Endothelial cell of umbilical vein (primary cell): ENCODE measurements at regions of chr4 and their contacts with region 1.

Region 1: DNA sequence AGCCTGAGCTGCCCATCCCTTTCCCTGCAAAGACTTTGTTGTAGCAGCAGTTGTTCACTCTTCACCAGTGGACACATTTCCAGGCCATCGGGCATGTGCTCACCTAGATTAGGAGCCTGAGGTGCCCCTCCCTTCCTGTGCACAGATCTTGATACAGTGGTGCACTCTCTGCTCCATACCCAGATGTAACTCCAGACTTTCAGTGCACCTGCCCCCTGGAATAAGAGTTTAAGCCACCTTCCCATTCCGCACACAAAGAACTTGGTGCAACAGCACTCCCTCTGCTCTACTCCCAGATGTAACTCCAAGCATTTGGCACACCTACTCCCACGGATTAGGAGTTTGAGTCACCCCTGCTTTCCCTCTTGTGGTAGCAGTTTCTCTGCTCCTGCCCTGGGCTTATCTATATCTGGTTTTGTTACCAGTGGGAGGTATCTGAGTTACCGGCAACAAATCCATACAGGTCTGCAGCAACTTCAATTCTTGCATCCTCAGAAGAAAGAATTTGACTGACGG is 36.0 kb upstream of the PLK4 start:
- DNase-seq: no peak
- H3K4me3 ChIP-seq: no peak overlapping the region
- H3K27ac ChIP-seq: no peak overlapping the region
- H3K4me1 ChIP-seq: no peaks in the 10 kb centered on the region
- H3K27me3 ChIP-seq: no peaks in the 10 kb centered on the region
- CTCF ChIP-seq: no peak
- POLR2A ChIP-seq: no peak

Region 2: DNA sequence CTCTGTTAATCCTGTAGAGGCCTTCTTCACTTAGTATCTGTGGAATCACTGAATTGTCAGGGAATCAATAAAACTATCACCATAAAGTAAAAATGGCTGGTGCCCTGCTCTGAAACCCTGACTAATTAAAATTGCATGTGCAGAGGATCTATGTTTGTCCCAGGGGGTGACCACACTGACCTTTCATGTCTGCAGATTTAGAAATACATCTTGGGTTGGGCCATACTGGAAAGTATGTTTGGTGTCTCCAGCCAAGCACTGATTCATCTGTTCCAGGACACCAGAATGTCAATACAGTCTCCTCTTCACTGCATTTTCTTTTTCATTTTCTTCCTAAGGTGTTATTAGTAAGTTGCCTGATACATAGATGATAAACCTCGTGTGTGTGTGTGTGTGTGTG is 702.8 kb before region 1 on chr4:
- CTCF ChIA-PET with region 1: no interaction called
- POLR2A ChIA-PET with region 1: no interaction called
- dilution Hi-C with region 1: no loop called
- intact Hi-C with region 1: no loop called
- DNase-seq: no peak
- H3K4me3 ChIP-seq: no peak overlapping the region
- H3K27ac ChIP-seq: no peak overlapping the region
- H3K4me1 ChIP-seq: no peaks in the 10 kb centered on the region
- H3K27me3 ChIP-seq: no peaks in the 10 kb centered on the region
- CTCF ChIP-seq: no peak
- POLR2A ChIP-seq: no peak

Region 3: GRCh38 chr4:127533028-127533700 is 311.5 kb before region 1 on chr4:
- CTCF ChIA-PET with region 1: no interaction called
- POLR2A ChIA-PET with region 1: interaction called, 11 read pairs
- dilution Hi-C with region 1: no loop called
- intact Hi-C with region 1: no loop called
- DNase-seq: peak; percentile 39
- H3K4me3 ChIP-seq: no peak overlapping the region
- H3K27ac ChIP-seq: no peak overlapping the region
- H3K4me1 ChIP-seq: no peaks in the 10 kb centered on the region
- H3K27me3 ChIP-seq: no peaks in the 10 kb centered on the region
- CTCF ChIP-seq: no peak
- POLR2A ChIP-seq: no peak

Region 4: GRCh38 chr4:128031756-128032384 is 187.2 kb after region 1 on chr4:
- CTCF ChIA-PET with region 1: no interaction called
- POLR2A ChIA-PET with region 1: no interaction called
- dilution Hi-C with region 1: no loop called
- intact Hi-C with region 1: no loop called
- DNase-seq: no peak
- H3K4me3 ChIP-seq: no peak overlapping the region
- H3K27ac ChIP-seq: no peak overlapping the region
- H3K4me1 ChIP-seq: no peaks in the 10 kb centered on the region
- H3K27me3 ChIP-seq: no peaks in the 10 kb centered on the region
- CTCF ChIP-seq: no peak
- POLR2A ChIP-seq: no peak